Left ventricle myocardium superior (tissue), 1 donor: ENCODE measurements at regions of chr6 and their contacts with region 1.

Region 1: DNA sequence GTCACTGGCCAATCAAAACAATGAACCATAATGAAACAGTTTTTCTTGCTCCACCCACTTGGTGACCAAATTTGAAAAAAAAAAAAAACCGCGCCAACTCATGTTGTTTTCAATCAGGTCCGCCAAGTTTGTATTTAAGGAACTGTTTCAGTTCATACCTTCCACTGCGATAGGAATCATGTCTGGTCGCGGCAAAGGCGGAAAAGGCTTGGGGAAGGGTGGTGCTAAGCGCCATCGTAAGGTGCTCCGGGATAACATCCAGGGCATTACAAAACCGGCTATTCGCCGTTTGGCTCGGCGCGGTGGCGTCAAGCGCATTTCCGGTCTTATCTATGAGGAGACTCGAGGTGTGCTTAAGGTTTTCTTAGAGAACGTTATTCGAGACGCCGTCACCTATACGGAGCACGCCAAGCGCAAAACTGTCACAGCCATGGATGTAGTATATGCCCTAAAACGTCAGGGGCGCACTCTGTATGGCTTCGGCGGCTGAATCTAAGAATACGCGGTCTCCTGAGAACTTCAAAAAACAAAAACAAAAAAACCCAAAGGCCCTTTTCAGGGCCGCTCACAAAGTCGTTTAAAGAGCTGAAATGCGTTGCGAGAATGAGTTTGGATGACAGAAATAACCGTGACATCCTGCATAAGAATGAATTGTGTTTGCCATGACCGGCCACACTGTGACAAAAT is 16.7 kb downstream of the HFE start:
- DNase-seq: peak; percentile 86
- ATAC-seq: peak; percentile 95

Region 2: DNA sequence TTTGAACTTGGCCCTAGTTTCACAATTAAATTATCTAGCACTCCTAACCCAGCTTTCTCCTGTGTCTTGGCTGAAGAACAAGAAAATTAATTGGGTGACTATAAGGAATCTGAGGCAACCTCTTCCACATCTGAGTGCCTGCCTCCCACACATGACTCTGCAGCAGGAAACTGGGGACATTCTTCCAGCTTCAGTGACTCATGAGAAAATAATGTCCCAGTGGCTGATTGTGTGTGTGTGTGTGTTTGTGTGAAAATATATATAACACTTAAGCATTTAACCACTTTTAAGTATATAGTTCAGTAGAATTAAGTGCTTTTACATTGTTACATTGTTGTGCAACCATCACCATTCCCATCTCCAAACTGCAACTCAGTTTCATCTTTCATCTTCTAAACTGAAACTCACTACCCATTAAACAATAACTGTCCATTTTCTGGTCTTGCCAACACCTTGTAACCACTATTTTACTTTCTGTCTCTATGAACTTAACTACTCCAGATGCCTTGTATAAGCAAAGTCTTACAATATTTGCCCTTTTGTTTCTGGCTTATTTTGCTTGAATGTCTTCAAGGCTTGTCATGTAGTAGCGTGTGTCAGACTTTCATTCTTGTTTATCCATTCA is 132.6 kb before region 1 on chr6:
- intact Hi-C with region 1: no loop called
- DNase-seq: no peak
- ATAC-seq: peak; percentile 76

Region 3: DNA sequence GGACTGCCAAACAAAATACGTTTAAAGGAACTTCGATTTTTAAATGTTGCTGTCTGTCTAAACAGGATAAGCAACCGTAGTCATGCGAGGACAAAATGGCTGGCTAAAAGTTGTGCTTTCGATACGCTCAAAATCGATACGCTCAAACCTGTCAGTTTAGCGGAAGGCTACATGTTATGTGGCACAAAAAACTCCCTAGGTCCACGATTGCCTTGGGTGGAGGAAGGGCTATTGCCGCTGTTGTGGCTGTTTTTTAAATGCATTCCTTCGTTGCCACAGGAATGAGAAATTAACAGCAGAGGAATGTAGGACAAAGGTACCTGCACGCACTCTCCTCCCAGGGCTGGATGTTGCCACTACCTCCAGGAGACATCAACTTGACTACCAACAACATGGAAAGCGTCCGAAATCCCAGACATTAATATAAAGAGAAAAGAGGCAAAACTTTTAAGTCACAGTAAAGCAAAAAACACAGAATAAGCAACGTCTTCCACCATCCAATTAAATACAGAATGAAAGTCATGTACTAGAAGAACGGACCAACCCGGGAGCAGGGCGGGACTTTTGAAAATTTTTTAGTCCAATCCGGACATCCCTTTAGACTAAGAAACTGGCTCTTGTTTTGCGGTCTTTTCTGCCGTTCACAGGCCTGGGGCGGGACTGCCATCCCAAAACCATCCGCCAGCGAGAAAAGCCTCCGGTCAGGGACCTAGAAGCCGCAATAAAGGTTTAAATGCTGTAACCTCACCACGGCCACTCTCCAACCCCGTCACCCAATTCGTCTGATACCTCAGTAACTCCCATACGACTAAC is 48.9 kb before region 1 on chr6:
- intact Hi-C with region 1: loop called (anchors 5 kb)
- DNase-seq: peak; percentile 77
- ATAC-seq: peak; percentile 85